G401 (cell line): ENCODE measurements at regions of chr13 and their contacts with region 1.

Region 1: DNA sequence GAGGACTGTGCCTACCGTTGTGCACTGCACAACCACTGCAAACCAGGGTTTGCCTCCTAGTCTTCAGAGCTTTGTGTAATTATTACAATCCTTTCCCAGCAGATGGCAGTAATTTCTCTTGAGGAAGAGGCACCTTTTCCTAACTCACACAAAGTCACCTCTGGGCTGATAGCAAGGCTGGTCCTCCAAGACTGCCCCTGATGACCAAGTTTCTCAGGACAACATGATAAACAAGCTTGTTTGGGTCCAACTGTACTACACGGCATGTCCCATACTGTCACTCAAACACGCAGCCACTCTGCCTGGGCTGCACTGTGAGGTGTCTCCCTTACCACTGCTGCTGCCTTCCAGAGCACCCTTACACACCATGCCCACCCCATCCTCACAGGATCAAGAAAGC is 39.3 kb downstream of the RFXAP start:
- DNase-seq: peak; percentile 37

Region 2: GRCh38 chr13:36925603-36926002 is 67.3 kb after region 1 on chr13:
- in situ Hi-C with region 1: no loop called
- DNase-seq: no peak

Region 3: GRCh38 chr13:36999054-36999714 is 140.9 kb after region 1 on chr13 and contains the start of gene ALG5:
- in situ Hi-C with region 1: loop called (anchors 25 kb)
- DNase-seq: peak; percentile 84
- total RNA-seq, gene ALG5: 7.4 and 14.7 TPM in 2 replicates